ENCODE measurements at regions of chr1 and their contacts with region 1.

Region 1: GRCh38 chr1:183915625-183916510 is 110.9 kb downstream of the RGL1 start:
- DNase-seq: peak in 1 of 2 donors; percentile 84
- ATAC-seq: peak; percentile 81 to 88 (median 86)
- H3K4me3 ChIP-seq: no peak overlapping the region
- H3K27ac ChIP-seq: peak overlapping the region in 7 of 10 donors; percentile 10 to 70 (median 47)
- H3K4me1 ChIP-seq: peaks cover 0 to 51% (median 18%) of the 10 kb centered on the region in 9 donors
- H3K27me3 ChIP-seq: no peaks in the 10 kb centered on the region
- CTCF ChIP-seq: peak; percentile 74 to 94 (median 87)

Region 2: DNA sequence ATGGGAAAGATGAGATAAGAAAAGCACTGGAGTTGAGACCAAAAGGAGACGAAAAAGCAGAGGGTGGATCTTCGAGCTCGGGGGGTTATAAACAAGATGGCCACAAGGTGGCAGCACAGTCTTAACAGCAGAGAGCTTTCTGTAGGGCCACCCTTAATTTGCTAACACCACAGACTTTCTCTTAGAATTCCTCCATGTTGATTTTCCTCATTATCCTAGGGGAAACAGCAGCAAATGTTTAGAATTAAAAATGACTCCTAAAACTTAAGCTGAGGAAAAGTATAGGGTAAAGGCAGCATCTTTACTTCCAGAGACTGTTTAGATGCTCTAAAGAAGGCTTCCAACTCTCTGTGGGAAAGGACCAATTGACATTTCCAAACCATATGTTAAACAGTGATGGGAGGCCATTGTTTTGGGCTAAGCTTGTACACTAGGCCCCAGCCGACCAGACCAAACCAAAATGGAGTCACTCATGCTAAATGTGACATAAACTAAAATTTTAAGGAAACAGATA is 260.2 kb before region 1 on chr1:
- intact Hi-C with region 1: loop called (anchors 1 to 5 kb)
- DNase-seq: peak; percentile 67 to 84
- ATAC-seq: peak; percentile 62 to 89 (median 83)
- H3K4me3 ChIP-seq: no peak overlapping the region
- H3K27ac ChIP-seq: peak overlapping the region in 1 of 10 donors; percentile 78
- H3K4me1 ChIP-seq: peaks cover 6 to 56% (median 41%) of the 10 kb centered on the region in 9 donors
- H3K27me3 ChIP-seq: no peaks in the 10 kb centered on the region
- CTCF ChIP-seq: peak; percentile 84 to 95 (median 92)

Region 3: DNA sequence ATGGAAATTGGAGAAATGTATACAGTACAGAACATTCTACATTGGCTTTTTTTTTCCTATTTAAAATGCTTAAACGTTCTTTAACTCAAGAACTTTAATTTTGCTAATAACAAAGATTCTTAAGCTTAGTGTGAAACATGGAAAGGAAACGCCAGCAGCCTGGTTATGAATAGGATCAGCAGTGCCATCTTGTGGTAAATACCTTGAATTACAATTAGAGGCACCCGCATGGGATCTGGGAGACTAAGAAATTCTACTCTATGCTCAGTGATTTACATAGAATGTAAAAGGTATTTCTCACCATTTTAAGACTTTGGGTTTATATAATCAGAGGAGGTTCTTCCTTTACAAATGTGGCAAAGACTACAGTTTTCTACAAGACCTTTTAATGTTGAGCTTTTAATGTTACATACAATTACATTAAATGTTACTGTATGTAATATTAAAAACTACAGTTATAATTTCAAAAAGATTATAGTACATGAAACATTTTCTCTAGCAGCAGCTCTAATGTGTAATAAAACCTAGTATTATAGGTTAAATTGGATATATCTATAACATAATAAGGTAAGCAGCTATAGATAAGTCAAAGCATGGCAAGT is 230.7 kb before region 1 on chr1:
- intact Hi-C with region 1: loop called in 6 of 10 experiments (anchors 1 to 10 kb)
- DNase-seq: peak in 1 of 2 donors; percentile 29
- ATAC-seq: peak in 5 of 8 donors; percentile 61 to 79 (median 72)
- H3K4me3 ChIP-seq: no peak overlapping the region
- H3K27ac ChIP-seq: no peak overlapping the region
- H3K4me1 ChIP-seq: peaks cover 0 to 32% (median 4%) of the 10 kb centered on the region in 9 donors
- H3K27me3 ChIP-seq: no peaks in the 10 kb centered on the region
- CTCF ChIP-seq: peak; percentile 67 to 90 (median 84)

Region 4: GRCh38 chr1:183804881-183805841 is 110.7 kb before region 1 on chr1 and contains the start of gene RGL1:
- intact Hi-C with region 1: loop called in 1 of 10 experiments (anchors 10 kb)
- DNase-seq: peak; percentile 70 to 76
- ATAC-seq: peak; percentile 86 to 96 (median 91)
- H3K4me3 ChIP-seq: peak within 1 kb of the TSS; percentile 55 to 73 (median 66)
- H3K27ac ChIP-seq: peak within 1 kb of the TSS; percentile 70 to 89 (median 80)
- H3K4me1 ChIP-seq: peaks cover 0 to 50% (median 30%) of the 10 kb centered on the region in 9 donors
- H3K27me3 ChIP-seq: no peaks in the 10 kb centered on the region
- CTCF ChIP-seq: no peak
- total RNA-seq, gene RGL1: 12.6 to 33.4 (median 18.9) TPM

Region 5: DNA sequence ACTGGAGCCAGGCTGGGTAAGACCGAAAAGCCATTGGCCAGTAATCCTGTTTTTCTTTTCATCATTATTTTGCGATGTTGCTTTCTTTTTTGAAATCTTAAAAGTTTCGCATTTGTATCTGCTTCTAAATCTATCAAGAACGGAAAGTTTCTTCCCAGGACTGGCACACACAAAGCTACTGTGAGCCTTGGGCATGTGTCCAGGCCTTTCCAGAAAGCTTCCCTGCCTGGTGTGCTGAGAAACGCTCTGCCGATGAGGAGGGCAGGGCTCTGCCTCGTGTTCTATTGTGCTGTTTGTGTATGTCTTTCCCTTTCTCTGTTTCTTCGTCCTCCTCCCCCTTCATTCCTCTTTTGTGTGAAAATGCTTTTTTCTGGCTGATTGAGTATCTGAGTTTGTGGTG is 38.5 kb before region 1 on chr1:
- intact Hi-C with region 1: loop called in 1 of 10 experiments (anchors 5 kb)
- DNase-seq: peak; percentile 43 to 56
- ATAC-seq: peak in 6 of 8 donors; percentile 39 to 65 (median 56)
- H3K4me3 ChIP-seq: peak overlapping the region in 6 of 10 donors; percentile 8 to 32 (median 24)
- H3K27ac ChIP-seq: peak overlapping the region in 9 of 10 donors; percentile 28 to 85 (median 64)
- H3K4me1 ChIP-seq: peaks cover 24 to 99% (median 83%) of the 10 kb centered on the region in 9 donors
- H3K27me3 ChIP-seq: no peaks in the 10 kb centered on the region
- CTCF ChIP-seq: no peak

Measured in heart right ventricle (tissue), 16 donors.